Dorsolateral prefrontal cortex (tissue), 120 donors: ENCODE measurements at regions of chr17 and their contacts with region 1.

Region 1: GRCh38 chr17:27353461-27354050 is 59.6 kb downstream of the WSB1 start:
- DNase-seq: peak; percentile 62 to 90 (median 78)
- H3K4me3 ChIP-seq: peak overlapping the region; percentile 51 to 89 (median 73)
- H3K27ac ChIP-seq: peak overlapping the region; percentile 37 to 98 (median 91)
- H3K27me3 ChIP-seq: no peaks in the 10 kb centered on the region
- CTCF ChIP-seq: peak; percentile 38 to 99 (median 87)

Region 2: GRCh38 chr17:27245230-27245696 is 108.3 kb before region 1 on chr17:
- intact Hi-C with region 1: loop called in 1 of 2 experiments (anchors 5 kb)
- DNase-seq: peak; percentile 18 to 89 (median 82)
- H3K4me3 ChIP-seq: peak overlapping the region in 21 of 59 donors; percentile 1 to 30 (median 14)
- H3K27ac ChIP-seq: peak overlapping the region; percentile 2 to 92 (median 84)
- H3K27me3 ChIP-seq: no peaks in the 10 kb centered on the region
- CTCF ChIP-seq: peak; percentile 41 to 94 (median 78)

Region 3: GRCh38 chr17:27494192-27495091 is 140.9 kb after region 1 on chr17:
- intact Hi-C with region 1: loop called in 1 of 2 experiments (anchors 5 kb)
- DNase-seq: peak in 6 of 10 donors; percentile 40 to 68 (median 56)
- H3K4me3 ChIP-seq: peak overlapping the region in 44 of 59 donors; percentile 1 to 56 (median 26)
- H3K27ac ChIP-seq: peak overlapping the region in 58 of 59 donors; percentile 21 to 88 (median 73)
- H3K27me3 ChIP-seq: no peaks in the 10 kb centered on the region
- CTCF ChIP-seq: peak in 53 of 56 donors; percentile 20 to 80 (median 58)